PC-9 (cell line): ENCODE measurements at regions of chr2 and their contacts with region 1.

Region 1: DNA sequence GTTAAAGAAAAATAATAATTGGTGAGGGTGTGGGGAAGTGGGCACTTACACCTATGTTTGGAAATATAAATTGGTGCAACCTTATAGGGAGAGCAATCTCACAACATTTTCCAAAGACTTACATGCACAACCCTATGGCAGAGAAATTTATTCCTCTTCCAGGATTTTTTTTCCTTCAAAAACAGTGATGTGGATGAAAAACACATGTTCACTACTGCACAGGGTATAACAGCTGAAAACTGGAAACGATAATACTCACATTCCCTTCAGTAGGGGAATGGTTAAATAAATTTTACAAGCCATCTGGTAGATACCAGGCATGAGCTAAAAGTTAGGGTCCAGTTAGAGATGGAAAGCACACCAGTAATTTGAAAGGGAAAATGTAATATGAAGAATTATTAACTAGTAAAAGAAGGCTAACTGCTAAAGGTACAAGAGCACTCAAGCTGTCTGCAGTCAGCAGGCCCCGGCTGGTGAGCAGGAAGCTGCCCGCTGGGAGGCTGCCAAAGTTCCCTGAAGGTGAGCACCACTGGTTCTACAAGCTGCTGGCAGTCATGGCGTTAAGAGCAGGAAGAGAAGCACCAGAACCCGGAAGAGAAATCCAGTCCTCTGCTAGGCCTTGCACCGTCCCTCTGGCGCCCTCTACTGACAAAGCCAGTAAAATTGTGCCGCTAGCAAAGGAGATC is 28.4 kb upstream of the CASP8 start:
- DNase-seq: peak; percentile 92
- H3K4me3 ChIP-seq: peak overlapping the region; percentile 23; the same call in 1 of the 2 replicates
- H3K27ac ChIP-seq: peak overlapping the region; percentile 38
- H3K4me1 ChIP-seq: peaks cover 54% of the 10 kb centered on the region
- H3K27me3 ChIP-seq: no peaks in the 10 kb centered on the region
- CTCF ChIP-seq: peak; percentile 93

Region 2: GRCh38 chr2:200635251-200635650 is 596.7 kb before region 1 on chr2:
- CTCF ChIA-PET with region 1: no interaction called
- POLR2A ChIA-PET with region 1: no interaction called
- intact Hi-C with region 1: no loop called
- DNase-seq: no peak
- H3K4me3 ChIP-seq: no peak overlapping the region
- H3K27ac ChIP-seq: no peak overlapping the region
- H3K4me1 ChIP-seq: no peaks in the 10 kb centered on the region; the same call in 1 of the 2 replicates
- H3K27me3 ChIP-seq: no peaks in the 10 kb centered on the region
- CTCF ChIP-seq: no peak

Region 3: GRCh38 chr2:200963124-200963917 is 268.6 kb before region 1 on chr2 and contains the start of gene ORC2:
- CTCF ChIA-PET with region 1: interaction called, 4 read pairs
- POLR2A ChIA-PET with region 1: no interaction called
- intact Hi-C with region 1: loop called (anchors 1 kb)
- DNase-seq: peak; percentile 87 to 96
- H3K4me3 ChIP-seq: peak within 1 kb of the TSS; percentile 95
- H3K27ac ChIP-seq: peak within 1 kb of the TSS; percentile 76
- H3K4me1 ChIP-seq: peaks cover 51% of the 10 kb centered on the region
- H3K27me3 ChIP-seq: no peaks in the 10 kb centered on the region
- CTCF ChIP-seq: peak; percentile 65; the same call in 1 of the 2 replicates
- total RNA-seq, gene ORC2: 34.0 and 43.3 TPM in 2 replicates

Region 4: GRCh38 chr2:201182650-201183364 is 49.1 kb before region 1 on chr2 and contains the start of gene CASP10:
- CTCF ChIA-PET with region 1: interaction called, 59 read pairs
- POLR2A ChIA-PET with region 1: interaction called, 24 read pairs
- intact Hi-C with region 1: loop called (anchors 1 kb)
- DNase-seq: peak; percentile 44 to 80
- H3K4me3 ChIP-seq: peak within 1 kb of the TSS; percentile 57
- H3K27ac ChIP-seq: peak within 1 kb of the TSS; percentile 31
- H3K4me1 ChIP-seq: 0 out of 2 replicates have a peak, but pooled peaks cover 17% of the 10 kb centered on the region
- H3K27me3 ChIP-seq: no peaks in the 10 kb centered on the region
- CTCF ChIP-seq: peak; percentile 64
- total RNA-seq, gene CASP10: 15.2 and 16.9 TPM in 2 replicates

Region 5: DNA sequence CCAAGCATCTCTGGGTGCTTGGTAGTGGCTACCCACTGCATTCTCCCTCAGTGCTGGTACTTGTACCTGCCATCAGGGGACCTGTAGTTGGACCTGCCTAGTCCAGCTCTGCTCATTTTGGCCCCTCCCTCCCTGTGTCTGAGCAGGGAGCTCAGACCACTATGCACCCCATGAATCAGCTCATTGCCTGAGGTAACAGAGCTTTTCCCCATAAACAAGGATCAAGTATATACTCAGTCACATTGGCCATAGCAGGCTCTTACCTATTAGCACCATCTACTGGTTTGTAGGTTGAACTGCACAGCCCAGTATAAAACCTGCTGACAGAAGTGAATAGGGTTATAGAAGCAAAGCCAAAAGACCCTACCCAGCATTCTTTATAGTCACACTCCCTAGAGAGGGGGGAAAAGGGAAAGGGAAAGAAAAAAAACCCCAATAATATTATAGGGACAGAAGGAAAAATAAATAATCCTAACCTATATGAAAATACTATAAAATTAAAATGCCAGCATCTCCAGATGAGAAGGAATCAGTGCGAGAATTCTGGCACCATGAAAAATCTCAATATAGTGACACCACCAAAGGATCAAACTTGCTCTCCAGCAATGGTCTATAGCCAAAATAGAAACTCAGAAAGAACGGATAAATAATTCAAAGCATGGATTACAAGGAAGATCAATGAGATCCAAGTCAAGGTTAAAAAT is 132.1 kb after region 1 on chr2:
- CTCF ChIA-PET with region 1: interaction called, 3 read pairs
- POLR2A ChIA-PET with region 1: no interaction called
- intact Hi-C with region 1: loop called (anchors 1 kb)
- DNase-seq: peak; percentile 10 to 57
- H3K4me3 ChIP-seq: no peak overlapping the region
- H3K27ac ChIP-seq: no peak overlapping the region
- H3K4me1 ChIP-seq: peaks cover 4% of the 10 kb centered on the region; the same call in 1 of the 2 replicates
- H3K27me3 ChIP-seq: no peaks in the 10 kb centered on the region
- CTCF ChIP-seq: peak; percentile 91

Region 6: GRCh38 chr2:201517094-201517493 is 285.2 kb after region 1 on chr2:
- CTCF ChIA-PET with region 1: no interaction called
- POLR2A ChIA-PET with region 1: no interaction called
- intact Hi-C with region 1: no loop called
- DNase-seq: no peak
- H3K4me3 ChIP-seq: no peak overlapping the region
- H3K27ac ChIP-seq: no peak overlapping the region
- H3K4me1 ChIP-seq: no peaks in the 10 kb centered on the region
- H3K27me3 ChIP-seq: no peaks in the 10 kb centered on the region
- CTCF ChIP-seq: no peak

Region 7: DNA sequence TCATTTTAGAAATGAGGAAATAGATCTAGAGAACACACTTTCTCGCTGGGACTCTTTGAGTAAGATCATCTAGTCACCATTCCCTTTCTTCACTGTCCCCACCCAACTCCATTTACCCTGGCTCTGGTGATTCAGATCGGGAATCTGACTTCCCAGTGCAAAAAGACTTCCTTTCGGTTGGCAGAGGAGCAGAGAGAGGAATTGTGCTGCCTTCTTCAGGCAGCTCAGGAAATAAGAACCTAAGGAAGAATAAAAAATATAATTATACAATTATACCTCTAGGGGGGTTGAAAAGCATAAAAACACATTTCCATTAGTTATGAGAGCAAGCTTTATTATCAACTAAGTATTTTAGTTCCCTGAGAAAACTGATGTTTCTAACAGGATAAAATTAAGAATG is 475.8 kb after region 1 on chr2:
- CTCF ChIA-PET with region 1: no interaction called
- POLR2A ChIA-PET with region 1: no interaction called
- intact Hi-C with region 1: loop called (anchors 2 kb)
- DNase-seq: no peak
- H3K4me3 ChIP-seq: no peak overlapping the region
- H3K27ac ChIP-seq: no peak overlapping the region
- H3K4me1 ChIP-seq: no peaks in the 10 kb centered on the region
- H3K27me3 ChIP-seq: no peaks in the 10 kb centered on the region
- CTCF ChIP-seq: no peak

Region 8: DNA sequence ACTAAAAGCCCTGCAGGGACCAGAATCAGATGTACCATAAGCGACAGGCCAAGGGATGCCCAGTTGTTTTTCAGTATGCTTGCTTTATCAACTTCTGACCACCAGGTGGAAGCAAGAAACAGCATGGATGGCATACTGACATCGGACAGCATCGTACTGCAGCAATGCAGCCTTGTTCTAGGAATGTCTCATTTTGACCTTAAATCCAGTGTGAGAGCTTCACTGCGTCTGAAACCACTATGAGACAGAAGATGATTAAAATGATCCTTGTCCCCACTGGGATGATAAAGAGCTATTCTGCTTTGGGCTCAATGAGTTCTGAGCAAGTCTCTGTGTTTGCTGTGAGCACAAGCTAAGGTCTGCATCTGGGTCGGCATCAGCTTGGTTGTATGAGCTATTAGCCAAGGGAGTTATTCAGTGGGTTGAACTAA is 628.7 kb after region 1 on chr2:
- CTCF ChIA-PET with region 1: no interaction called
- POLR2A ChIA-PET with region 1: no interaction called
- intact Hi-C with region 1: loop called (anchors 10 kb)
- DNase-seq: peak; percentile 54 to 57
- H3K4me3 ChIP-seq: no peak overlapping the region
- H3K27ac ChIP-seq: no peak overlapping the region
- H3K4me1 ChIP-seq: peaks cover under 1% of the 10 kb centered on the region; the same call in 1 of the 2 replicates
- H3K27me3 ChIP-seq: no peaks in the 10 kb centered on the region
- CTCF ChIP-seq: peak; percentile 86